Activated CD4-positive, alpha-beta memory T cell treated with anti-CD3 and anti-CD28 coated beads for 36 hours (primary cell): ENCODE measurements at regions of chr1 and their contacts with region 1.

Region 1: DNA sequence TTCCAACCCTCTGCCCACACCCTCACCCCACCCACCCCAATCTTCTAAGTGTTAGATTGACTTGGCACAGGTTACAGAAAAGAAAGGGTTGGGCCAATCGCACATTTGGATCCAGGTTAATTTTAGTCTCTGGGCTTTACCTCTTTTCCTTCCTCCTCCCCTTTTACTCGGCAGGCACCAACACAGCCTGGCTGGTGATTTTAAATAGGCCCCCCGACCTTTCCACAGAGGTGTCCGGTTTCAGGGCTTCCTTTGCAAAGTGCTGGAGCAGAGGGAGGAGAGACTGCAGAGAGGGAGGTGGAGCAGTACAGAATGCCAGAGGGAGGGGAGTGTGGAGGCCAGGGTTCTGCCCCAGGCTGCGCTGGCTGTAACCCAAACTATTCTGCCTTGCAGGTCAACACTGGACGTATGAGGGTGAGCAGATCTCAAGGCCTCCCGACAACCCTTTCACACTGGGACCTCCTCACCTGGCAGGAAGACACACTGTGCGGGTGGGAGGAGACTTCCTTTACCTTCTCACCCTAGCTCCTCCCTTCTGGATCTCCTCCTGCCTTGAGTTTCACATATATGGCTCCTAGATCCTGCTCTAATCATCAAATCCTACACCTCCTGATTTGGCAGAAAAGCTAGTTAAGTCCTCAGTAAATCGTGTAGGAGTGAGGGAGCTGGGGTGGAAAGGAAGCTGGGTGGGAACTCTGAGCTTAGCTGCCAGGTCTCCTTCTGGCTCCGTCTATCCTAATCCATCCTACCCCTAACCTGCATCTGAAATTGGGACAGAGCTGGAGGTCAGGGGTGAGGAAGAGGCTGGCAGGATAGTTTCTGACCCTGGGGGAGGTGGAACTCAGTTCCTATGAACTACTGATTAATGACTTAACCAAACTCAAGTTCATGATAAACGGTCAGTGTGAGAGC is 2.4 kb downstream of the CA14 start:
- DNase-seq: no peak
- H3K4me3 Mint-ChIP-seq: no peak overlapping the region
- H3K27ac Mint-ChIP-seq: no peak overlapping the region
- H3K4me1 Mint-ChIP-seq: peaks cover 18% of the 10 kb centered on the region
- H3K27me3 Mint-ChIP-seq: peaks cover 27% of the 10 kb centered on the region

Region 2: DNA sequence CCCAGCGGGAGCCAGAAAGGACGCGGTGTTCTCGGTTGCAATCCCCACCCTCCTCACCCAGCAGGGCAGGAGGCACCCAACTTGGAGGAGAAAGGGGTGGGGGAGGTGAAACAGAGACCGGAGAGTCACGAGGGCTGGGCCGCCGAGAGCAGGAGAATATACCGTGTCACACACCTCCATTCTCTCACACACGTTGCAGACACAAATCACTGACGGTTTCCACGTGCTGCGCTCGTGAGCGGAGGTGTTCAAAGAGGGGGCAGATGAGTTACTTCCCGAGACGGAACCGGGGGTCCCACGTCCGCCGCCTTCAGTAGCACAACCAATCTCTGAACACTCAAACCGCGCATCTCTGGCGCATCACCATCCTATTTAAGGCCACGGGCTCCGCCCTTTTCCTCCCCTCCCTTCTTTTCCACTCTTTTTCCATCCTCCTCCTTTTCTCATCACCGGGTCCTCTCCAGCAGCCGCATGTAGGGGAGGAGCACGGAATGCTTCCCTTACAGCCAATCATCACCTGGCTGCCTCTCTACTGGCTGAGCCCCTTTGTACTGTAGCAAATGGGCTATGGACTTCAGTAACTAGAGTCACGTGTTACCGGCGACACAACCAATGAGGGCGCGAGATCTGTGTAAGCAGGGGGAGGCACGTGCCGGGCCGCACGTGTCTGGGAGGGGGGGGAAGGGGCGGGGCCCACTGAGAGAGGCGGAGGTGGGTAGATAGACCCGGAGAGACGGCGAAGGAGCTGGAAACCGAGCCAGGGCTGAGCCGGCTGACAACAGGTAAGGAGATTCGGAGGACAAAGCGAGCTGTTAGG is 22.0 kb after region 1 on chr1 and contains the start of gene CIART:
- CTCF ChIA-PET with region 1: interaction called, 66 read pairs
- POLR2A ChIA-PET with region 1: interaction called, 3 read pairs
- intact Hi-C with region 1: loop called (anchors 1 kb)
- DNase-seq: peak; percentile 86
- H3K4me3 Mint-ChIP-seq: peak within 1 kb of the TSS; percentile 76
- H3K27ac Mint-ChIP-seq: peak within 1 kb of the TSS; percentile 40
- H3K4me1 Mint-ChIP-seq: peaks cover 27% of the 10 kb centered on the region
- H3K27me3 Mint-ChIP-seq: no peaks in the 10 kb centered on the region
- total RNA-seq, gene CIART: 1.3 to 1.5 TPM

Region 3: GRCh38 chr1:150321826-150322166 is 61.8 kb after region 1 on chr1:
- CTCF ChIA-PET with region 1: interaction called, 14 read pairs
- POLR2A ChIA-PET with region 1: no interaction called
- intact Hi-C with region 1: loop called (anchors 5 kb)
- DNase-seq: no peak
- H3K4me3 Mint-ChIP-seq: peak overlapping the region; percentile 99
- H3K27ac Mint-ChIP-seq: peak overlapping the region; percentile 97
- H3K4me1 Mint-ChIP-seq: peaks cover 27% of the 10 kb centered on the region
- H3K27me3 Mint-ChIP-seq: no peaks in the 10 kb centered on the region

Region 4: DNA sequence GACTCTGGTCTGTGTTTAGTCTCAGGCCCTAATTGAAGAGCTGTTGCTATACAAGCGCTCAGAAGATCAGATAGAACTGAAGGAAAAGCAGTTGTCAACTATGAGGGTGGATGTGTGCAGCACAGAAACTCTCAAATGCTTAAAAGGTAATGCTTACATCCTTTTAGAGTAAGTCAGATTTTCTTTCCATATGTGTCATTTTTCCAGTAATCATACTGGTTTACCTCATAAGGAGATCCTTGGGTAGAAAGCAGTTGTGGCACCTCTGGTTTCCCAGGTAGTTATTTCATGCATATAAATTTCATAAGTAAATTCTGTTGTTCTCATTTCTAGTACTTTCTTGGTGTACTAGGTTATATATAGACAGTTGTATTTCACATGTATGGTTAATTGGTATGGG is 184.2 kb after region 1 on chr1:
- CTCF ChIA-PET with region 1: interaction called, 5 read pairs
- POLR2A ChIA-PET with region 1: no interaction called
- intact Hi-C with region 1: loop called (anchors 5 kb)
- DNase-seq: peak; percentile 13
- H3K4me3 Mint-ChIP-seq: no peak overlapping the region
- H3K27ac Mint-ChIP-seq: peak overlapping the region; percentile 87
- H3K4me1 Mint-ChIP-seq: peaks cover 12% of the 10 kb centered on the region
- H3K27me3 Mint-ChIP-seq: no peaks in the 10 kb centered on the region

Region 5: DNA sequence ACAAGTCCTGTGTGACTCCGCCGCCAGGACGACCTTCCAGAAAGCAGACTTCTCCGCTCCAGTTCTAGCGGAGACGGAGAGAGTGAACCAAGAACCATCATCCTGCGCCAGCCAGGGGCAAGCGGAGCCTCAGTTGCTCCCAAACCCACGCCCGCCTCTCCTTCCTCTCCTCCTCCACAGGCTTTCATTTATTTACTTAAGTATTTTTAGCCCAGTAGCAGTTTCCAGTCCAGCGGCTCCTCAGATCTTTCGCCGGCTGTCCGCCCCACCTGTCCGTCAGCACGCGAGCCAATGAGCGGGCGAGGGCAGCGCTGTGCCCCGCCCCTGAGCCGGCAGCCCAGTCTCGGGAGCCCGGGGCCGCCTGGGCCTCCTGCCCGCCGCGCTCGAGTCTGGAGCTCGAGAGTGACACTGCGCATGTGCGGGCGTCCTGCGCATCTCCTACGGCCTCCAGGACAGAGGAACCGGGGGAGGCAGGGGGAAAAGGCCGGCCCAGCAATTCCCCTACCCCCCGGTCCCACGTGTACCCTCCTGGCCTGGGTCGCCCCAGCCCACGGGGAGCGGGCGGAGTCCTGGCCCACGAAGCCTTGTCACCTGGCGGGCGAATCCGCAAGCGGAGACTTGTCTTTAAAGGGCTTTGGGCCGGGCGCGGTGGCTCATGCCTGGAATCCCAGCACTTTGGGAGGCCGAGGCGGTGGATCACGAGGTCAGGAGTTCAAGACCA is 255.5 kb after region 1 on chr1 and contains the start of gene FALEC:
- CTCF ChIA-PET with region 1: interaction called, 15 read pairs
- POLR2A ChIA-PET with region 1: interaction called, 3 read pairs
- intact Hi-C with region 1: loop called (anchors 10 kb)
- DNase-seq: peak; percentile 94
- H3K4me3 Mint-ChIP-seq: peak within 1 kb of the TSS; percentile 83
- H3K27ac Mint-ChIP-seq: peak within 1 kb of the TSS; percentile 33
- H3K4me1 Mint-ChIP-seq: peaks cover 11% of the 10 kb centered on the region
- H3K27me3 Mint-ChIP-seq: no peaks in the 10 kb centered on the region
- total RNA-seq, gene FALEC: not detected